Naive thymus-derived CD4-positive, alpha-beta T cell (primary cell): ENCODE measurements at regions of chr19 and their contacts with region 1.

Region 1: DNA sequence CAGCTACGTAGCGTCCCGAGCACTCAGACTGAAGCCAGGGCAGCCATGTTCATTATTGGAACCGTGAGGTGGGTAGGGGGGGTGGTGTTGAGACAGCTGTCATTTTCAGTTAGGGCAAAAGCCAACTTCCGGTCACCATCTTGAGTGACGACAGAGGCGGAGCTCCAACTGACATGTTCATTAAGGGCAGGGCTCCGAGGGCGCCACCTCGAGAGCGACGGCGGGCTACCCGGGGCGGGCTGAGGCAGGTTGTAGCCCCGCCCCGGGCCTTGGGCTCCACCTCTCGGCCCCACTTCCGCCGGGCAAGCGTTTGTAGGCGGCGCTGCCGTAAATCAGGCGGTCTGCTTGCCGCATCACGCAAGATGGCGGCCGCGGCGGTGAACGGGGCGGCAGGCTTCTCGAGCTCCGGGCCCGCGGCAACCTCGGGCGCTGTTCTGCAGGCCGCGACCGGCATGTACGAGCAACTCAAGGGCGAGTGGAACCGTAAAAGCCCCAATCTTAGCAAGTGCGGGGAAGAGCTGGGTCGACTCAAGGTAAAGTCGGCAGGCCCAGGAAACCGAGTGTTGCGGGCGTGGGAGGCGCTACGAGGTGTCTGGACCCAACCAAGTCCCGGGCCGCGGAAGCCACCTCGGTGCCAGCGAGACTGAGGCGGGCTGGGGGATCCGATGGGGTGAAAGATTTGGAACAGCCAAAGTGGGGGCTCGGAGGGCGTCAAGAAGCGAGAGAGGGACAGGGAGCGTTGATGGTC is at the start of gene PSMD8:
- DNase-seq: peak; percentile 95 to 99 (median 99)
- ATAC-seq: peak; percentile 99
- H3K4me3 ChIP-seq: peak within 1 kb of the TSS; percentile 96
- H3K4me3 Mint-ChIP-seq: peak within 1 kb of the TSS; percentile 96 to 100 (median 98)
- H3K27ac ChIP-seq: peak within 1 kb of the TSS; percentile 93
- H3K27ac Mint-ChIP-seq: peak within 1 kb of the TSS; percentile 90 to 99 (median 98)
- H3K4me1 ChIP-seq: peaks cover 17 to 19% of the 10 kb centered on the region in 2 donors
- H3K4me1 Mint-ChIP-seq: peaks cover 17 to 32% (median 29%) of the 10 kb centered on the region in 7 donors
- H3K27me3 ChIP-seq: peaks cover 0 to 4% of the 10 kb centered on the region in 2 donors
- H3K27me3 Mint-ChIP-seq: peaks cover 0 to 8% (median 2%) of the 10 kb centered on the region in 5 donors
- total RNA-seq, gene PSMD8: 68.4 to 181 (median 75.8) TPM

Region 2: DNA sequence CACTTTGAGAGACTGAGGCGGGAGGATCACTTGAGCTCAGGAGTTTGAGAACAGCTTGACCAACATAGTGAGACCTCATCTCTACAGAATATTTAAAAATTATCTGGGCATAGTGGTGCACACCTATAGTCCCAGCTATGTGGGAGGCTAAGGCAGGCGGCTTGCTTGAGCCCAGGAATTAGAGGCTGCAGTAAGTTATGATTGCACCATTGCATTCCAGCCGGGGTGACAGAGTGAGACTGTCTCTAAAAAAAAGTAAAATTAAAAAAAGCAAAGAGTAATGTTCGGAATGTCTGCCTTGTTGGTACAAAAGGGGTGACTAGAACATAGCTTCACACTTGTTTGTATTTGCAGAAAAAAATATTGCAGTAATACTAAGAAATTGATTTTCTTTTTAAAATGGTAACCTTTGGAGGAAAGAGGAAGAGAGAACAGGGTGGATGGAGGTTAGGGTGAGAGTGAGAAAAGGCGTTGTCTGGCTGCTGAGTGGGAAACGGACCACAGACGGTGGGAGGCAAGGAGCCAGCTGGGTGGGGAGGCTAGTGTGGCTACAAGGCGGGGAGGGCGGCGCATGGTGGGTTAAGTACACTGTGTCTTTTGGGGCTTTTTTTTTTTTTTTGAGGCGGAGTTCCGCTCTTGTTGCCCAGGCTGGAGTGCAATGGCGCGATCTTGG is 128.6 kb before region 1 on chr19:
- CTCF ChIA-PET with region 1: interaction called, 4 read pairs
- POLR2A ChIA-PET with region 1: interaction called, 9 read pairs
- intact Hi-C with region 1: loop called in 1 of 2 experiments (anchors 1 kb)
- DNase-seq: no peak
- ATAC-seq: no peak
- H3K4me3 ChIP-seq: no peak overlapping the region
- H3K4me3 Mint-ChIP-seq: no peak overlapping the region
- H3K27ac ChIP-seq: no peak overlapping the region
- H3K27ac Mint-ChIP-seq: peak overlapping the region in 1 of 9 donors; percentile 33
- H3K4me1 ChIP-seq: peaks cover 0 to 3% of the 10 kb centered on the region in 2 donors
- H3K4me1 Mint-ChIP-seq: peaks cover 4 to 14% (median 5%) of the 10 kb centered on the region in 7 donors
- H3K27me3 ChIP-seq: no peaks in the 10 kb centered on the region
- H3K27me3 Mint-ChIP-seq: peaks cover 0 to 5% (median 0%) of the 10 kb centered on the region in 5 donors

Region 3: DNA sequence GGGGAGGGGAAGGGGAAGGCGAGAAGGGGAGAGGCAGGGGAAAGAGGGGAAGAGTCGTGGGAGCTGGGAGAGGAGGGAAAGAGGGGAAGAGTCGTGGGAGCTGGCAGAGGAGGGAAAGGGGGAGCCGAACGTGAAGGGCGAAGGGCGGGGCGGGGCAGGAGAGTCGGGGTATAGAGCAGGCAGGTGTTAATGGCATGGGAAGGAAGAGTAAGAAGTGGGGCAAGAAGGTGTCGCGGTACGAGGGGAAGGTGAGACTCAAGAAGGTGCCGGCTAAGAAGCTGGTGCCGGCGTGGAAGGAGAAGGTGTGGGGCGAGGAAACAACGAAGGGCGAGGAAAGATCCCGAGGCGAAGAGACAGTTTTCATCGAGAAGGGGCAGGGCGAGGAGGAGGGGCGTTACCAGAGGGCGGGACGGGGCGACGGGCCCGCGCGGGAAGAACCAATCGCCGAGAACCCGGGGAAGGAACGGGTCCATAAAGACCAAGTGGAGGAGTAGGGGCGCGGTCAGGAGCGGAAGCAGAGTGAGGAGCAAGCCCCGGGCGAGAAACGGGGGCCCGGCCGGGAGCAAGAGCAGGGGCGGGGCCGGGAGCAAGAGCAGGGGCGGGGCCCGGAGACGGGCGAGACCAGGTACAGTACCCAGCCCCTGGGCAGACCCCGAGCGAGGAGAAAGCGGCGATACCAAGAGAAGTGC is 38.5 kb before region 1 on chr19:
- CTCF ChIA-PET with region 1: interaction called, 12 read pairs
- POLR2A ChIA-PET with region 1: interaction called, 24 read pairs
- intact Hi-C with region 1: loop called (anchors 1 kb)
- DNase-seq: peak; percentile 86 to 94 (median 93)
- ATAC-seq: peak; percentile 77
- H3K4me3 ChIP-seq: peak overlapping the region; percentile 92
- H3K4me3 Mint-ChIP-seq: peak overlapping the region; percentile 92 to 100 (median 96)
- H3K27ac ChIP-seq: peak overlapping the region; percentile 86
- H3K27ac Mint-ChIP-seq: peak overlapping the region; percentile 91 to 100 (median 97)
- H3K4me1 ChIP-seq: peaks cover 3 to 5% of the 10 kb centered on the region in 2 donors
- H3K4me1 Mint-ChIP-seq: peaks cover 16 to 28% (median 17%) of the 10 kb centered on the region in 7 donors
- H3K27me3 ChIP-seq: no peaks in the 10 kb centered on the region
- H3K27me3 Mint-ChIP-seq: no peaks in the 10 kb centered on the region

Region 4: GRCh38 chr19:38394488-38394887 is 19.9 kb after region 1 on chr19:
- CTCF ChIA-PET with region 1: interaction called, 11 read pairs
- POLR2A ChIA-PET with region 1: interaction called, 15 read pairs
- intact Hi-C with region 1: no loop called
- DNase-seq: peak in 8 of 9 donors; percentile 37 to 76 (median 51)
- ATAC-seq: peak; percentile 75
- H3K4me3 ChIP-seq: peak overlapping the region; percentile 56
- H3K4me3 Mint-ChIP-seq: peak overlapping the region; percentile 65 to 84 (median 81)
- H3K27ac ChIP-seq: peak overlapping the region; percentile 60
- H3K27ac Mint-ChIP-seq: peak overlapping the region in 8 of 9 donors; percentile 5 to 84 (median 72)
- H3K4me1 ChIP-seq: peaks cover 5 to 19% of the 10 kb centered on the region in 2 donors
- H3K4me1 Mint-ChIP-seq: peaks cover 8 to 32% (median 25%) of the 10 kb centered on the region in 7 donors
- H3K27me3 ChIP-seq: no peaks in the 10 kb centered on the region
- H3K27me3 Mint-ChIP-seq: peaks cover 0 to 34% (median 9%) of the 10 kb centered on the region in 5 donors

Region 5: DNA sequence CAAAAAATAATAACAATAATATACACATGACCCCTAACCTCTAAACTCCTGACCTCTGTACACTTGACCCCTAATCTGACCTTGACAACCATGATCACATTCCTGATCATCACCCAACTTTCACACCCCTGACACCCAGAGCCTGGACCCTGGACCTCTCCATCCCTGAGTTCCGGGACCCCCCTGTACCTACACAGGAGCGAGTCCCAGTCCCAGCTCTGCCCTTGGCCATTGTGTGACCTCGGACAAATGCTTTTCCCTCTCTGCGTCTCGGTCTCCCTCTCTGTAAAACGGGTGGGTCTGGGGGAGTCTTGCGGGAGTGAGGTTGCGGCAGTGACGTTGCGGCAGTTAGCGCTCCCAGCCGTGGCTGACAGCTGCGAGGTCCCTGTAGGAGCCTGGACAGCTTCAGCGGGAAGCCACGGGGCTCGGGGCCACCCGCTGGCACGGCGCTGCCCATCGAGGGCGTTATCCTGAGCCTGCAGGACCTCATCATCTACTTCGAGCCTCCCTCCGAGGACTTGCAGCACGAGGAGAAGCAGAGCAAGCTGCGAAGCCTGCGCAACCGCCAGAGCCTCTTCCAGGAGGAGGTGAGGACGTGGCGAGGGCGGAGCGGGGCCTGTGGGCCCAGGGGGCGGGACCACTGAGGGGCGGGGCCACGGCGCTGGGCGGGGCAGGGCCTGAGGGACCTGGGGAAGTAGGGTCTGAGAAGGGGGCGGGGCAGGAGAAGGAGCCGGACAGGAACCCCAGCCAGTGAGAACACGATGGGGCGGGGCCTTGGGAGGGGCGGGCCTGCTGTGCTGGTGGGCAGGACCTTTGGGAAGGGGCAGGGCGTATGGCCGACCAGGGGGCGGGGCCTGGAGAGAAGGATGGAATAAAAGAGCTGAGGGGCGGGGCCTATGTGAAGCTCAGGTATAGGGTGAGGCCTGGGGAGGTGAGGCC is 78.1 kb after region 1 on chr19:
- CTCF ChIA-PET with region 1: no interaction called
- POLR2A ChIA-PET with region 1: no interaction called
- intact Hi-C with region 1: no loop called
- DNase-seq: no peak
- ATAC-seq: no peak
- H3K4me3 ChIP-seq: no peak overlapping the region
- H3K4me3 Mint-ChIP-seq: no peak overlapping the region
- H3K27ac ChIP-seq: no peak overlapping the region
- H3K27ac Mint-ChIP-seq: no peak overlapping the region
- H3K4me1 ChIP-seq: no peaks in the 10 kb centered on the region
- H3K4me1 Mint-ChIP-seq: peaks cover 0 to 1% (median 0%) of the 10 kb centered on the region in 7 donors
- H3K27me3 ChIP-seq: no peaks in the 10 kb centered on the region
- H3K27me3 Mint-ChIP-seq: peaks cover 0 to 7% (median 0%) of the 10 kb centered on the region in 5 donors

Region 6: GRCh38 chr19:38743394-38744295 is 369.0 kb after region 1 on chr19:
- CTCF ChIA-PET with region 1: no interaction called
- POLR2A ChIA-PET with region 1: interaction called, 10 read pairs
- intact Hi-C with region 1: no loop called
- DNase-seq: no peak
- ATAC-seq: no peak
- H3K4me3 ChIP-seq: no peak overlapping the region
- H3K4me3 Mint-ChIP-seq: no peak overlapping the region
- H3K27ac ChIP-seq: no peak overlapping the region
- H3K27ac Mint-ChIP-seq: no peak overlapping the region
- H3K4me1 ChIP-seq: peaks cover 0 to 9% of the 10 kb centered on the region in 2 donors
- H3K4me1 Mint-ChIP-seq: peaks cover 0 to 13% (median 5%) of the 10 kb centered on the region in 7 donors
- H3K27me3 ChIP-seq: no peaks in the 10 kb centered on the region
- H3K27me3 Mint-ChIP-seq: peaks cover 0 to 3% (median 0%) of the 10 kb centered on the region in 5 donors

Region 7: GRCh38 chr19:39390755-39391592 is 1016.4 kb after region 1 on chr19 and contains the starts of genes MED29 and PAF1:
- CTCF ChIA-PET with region 1: no interaction called
- POLR2A ChIA-PET with region 1: no interaction called
- intact Hi-C with region 1: loop called in 1 of 2 experiments (anchors 1 kb)
- DNase-seq: peak; percentile 76 to 99 (median 99)
- ATAC-seq: peak; percentile 95
- H3K4me3 ChIP-seq: peak within 1 kb of the TSS; percentile 84
- H3K4me3 Mint-ChIP-seq: peak within 1 kb of the TSS; percentile 89 to 99 (median 96)
- H3K27ac ChIP-seq: peak within 1 kb of the TSS; percentile 95
- H3K27ac Mint-ChIP-seq: peak within 1 kb of the TSS; percentile 95 to 100 (median 99)
- H3K4me1 ChIP-seq: peaks cover 16% of the 10 kb centered on the region in 2 donors
- H3K4me1 Mint-ChIP-seq: peaks cover 21 to 54% (median 38%) of the 10 kb centered on the region in 7 donors
- H3K27me3 ChIP-seq: no peaks in the 10 kb centered on the region
- H3K27me3 Mint-ChIP-seq: no peaks in the 10 kb centered on the region
- total RNA-seq, gene MED29: 44.2 to 57.2 (median 49.4) TPM
- total RNA-seq, gene PAF1: 42.8 to 104 (median 55.5) TPM

Region 8: GRCh38 chr19:40231544-40232424 is 1857.2 kb after region 1 on chr19:
- CTCF ChIA-PET with region 1: no interaction called
- POLR2A ChIA-PET with region 1: no interaction called
- intact Hi-C with region 1: no loop called
- DNase-seq: no peak
- ATAC-seq: no peak
- H3K4me3 ChIP-seq: no peak overlapping the region
- H3K4me3 Mint-ChIP-seq: no peak overlapping the region
- H3K27ac ChIP-seq: no peak overlapping the region
- H3K27ac Mint-ChIP-seq: peak overlapping the region in 2 of 9 donors; percentile 3 to 39
- H3K4me1 ChIP-seq: no peaks in the 10 kb centered on the region
- H3K4me1 Mint-ChIP-seq: peaks cover 0 to 14% (median 6%) of the 10 kb centered on the region in 7 donors
- H3K27me3 ChIP-seq: no peaks in the 10 kb centered on the region
- H3K27me3 Mint-ChIP-seq: peaks cover 0 to 16% (median 0%) of the 10 kb centered on the region in 5 donors